ENCODE measurements at regions of chr20 and their contacts with region 1.

Region 1: DNA sequence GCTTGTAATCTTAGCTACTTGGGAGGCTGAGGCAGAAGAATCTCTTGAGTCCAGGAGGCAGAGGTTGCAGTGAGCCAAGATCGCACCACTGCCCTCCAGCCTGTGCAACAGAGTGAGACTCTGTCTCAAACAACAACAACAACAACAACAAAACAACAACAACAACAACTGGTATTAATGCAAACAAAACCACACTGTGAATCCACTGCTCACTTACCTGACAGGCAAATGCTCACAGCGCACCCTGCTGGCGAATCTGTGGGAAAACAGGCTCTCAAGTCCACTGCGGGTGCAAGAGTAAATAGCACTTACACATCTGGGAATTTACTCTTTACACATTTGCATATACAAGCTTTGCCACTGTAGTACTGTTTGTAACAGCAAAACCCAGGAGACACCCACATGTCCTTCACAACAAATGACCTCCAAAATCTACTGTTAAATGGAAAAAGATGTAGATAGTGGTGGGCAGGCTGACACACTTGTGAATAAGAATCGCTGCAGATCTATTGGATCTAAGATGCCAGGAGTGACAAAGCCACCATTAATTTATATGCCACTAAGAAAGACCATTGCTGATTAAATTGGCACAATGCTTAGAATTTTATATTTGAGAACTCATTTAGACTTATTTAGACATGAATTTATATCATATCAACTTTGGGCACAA is 29.3 kb downstream of the NSFL1C start:
- DNase-seq: peak; percentile 79
- CTCF ChIP-seq: peak; percentile 85

Region 2: DNA sequence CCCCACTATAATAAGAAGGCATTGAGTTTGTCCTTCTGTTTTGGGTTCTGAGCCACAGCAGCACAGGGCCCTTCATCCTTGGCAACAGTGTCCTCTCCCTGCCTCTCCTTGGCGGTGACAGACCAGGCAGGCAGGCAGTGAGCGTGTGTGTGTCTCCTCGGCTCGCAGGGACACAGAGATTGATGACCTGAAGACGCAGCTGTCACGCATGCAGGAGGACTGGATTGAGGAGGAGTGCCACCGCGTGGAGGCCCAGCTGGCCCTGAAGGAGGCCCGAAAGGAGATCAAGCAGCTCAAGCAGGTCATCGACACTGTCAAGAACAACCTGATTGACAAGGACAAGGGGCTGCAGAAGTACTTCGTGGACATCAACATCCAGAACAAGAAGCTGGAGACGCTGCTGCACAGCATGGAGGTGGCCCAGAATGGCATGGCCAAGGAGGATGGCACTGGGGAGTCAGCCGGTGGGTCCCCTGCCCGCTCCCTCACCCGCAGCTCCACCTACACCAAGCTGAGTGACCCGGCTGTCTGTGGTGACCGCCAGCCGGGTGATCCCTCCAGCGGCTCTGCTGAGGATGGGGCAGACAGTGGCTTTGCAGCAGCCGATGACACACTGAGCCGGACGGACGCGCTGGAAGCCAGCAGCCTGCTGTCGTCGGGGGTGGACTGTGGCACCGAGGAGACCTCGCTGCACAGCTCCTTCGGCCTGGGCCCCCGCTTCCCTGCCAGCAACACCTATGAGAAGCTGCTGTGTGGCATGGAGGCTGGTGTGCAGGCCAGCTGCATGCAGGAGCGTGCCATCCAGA is 132.5 kb before region 1 on chr20:
- CTCF ChIA-PET with region 1: interaction called, 12 read pairs
- POLR2A ChIA-PET with region 1: no interaction called
- DNase-seq: no peak
- CTCF ChIP-seq: no peak

Region 3: DNA sequence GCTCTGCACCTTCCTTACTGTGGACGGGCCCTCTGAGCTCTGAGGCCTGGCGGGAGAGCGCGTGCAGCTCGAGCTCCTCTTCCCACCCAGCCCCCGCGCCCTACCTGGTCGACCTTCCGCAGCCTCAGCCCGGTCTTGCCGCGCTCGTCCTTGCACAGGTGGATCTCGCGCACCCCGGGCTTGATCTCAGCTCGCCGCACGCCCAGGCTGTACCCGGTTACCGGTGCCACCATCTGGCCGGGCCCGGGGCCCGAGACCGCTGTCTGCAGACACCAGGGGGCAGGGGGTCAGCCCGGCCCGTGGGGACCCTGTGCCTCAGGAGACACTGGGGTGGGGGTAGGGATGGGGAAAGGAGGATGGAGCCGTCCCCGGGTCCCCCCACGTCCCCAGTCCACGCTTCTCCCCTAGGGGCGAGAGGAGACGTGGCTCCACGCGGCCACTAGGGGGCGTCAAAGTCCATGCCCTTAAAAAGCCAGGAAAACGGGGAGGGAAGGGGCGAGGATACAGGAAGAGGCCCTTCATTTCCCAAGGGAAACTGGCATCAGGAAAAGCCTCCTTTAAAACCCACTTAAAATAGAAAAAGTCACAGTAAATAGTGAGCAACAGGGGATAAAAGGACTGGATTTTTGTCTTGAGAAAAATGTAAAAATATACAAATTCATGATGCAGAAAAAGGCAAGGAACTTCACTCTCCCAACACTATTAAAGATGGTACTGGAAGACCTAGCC is 124.0 kb before region 1 on chr20:
- CTCF ChIA-PET with region 1: interaction called, 47 read pairs
- POLR2A ChIA-PET with region 1: no interaction called
- DNase-seq: peak; percentile 81
- CTCF ChIP-seq: peak; percentile 88

Region 4: DNA sequence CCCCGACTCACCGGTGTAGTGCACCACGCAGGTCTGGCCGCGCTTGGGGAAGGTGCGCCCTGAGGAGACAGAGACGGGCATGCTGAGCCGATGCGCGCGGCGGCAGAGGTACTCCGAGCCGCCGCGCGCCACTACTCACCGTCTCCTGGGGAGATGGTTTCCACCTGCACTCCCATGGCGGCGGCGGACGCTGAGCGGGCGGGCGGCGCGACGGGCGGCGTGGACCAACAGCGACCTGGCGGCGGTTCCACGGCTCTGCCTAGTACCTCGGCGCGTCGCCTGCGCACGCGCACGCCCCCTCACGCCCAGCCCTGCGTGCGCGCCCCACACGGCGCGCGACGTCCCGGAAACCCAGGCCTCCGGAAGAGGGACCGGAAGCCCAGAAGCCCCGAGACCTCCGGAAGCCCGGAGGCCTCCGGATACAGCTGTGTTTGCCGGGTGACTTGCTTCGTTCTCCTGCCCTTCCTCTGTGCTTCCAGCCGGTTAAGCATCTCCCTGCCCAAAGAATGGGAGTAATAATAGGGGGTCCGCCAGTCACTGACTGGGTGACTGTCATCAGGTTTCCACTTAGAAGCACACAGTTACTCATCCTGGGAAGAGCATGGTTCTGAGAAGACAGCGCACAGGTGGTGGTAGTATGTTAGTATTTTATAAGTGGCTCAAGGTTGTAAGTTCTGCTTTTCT is 44.4 kb before region 1 on chr20 and contains the start of gene FKBP1A:
- CTCF ChIA-PET with region 1: interaction called, 24 read pairs
- POLR2A ChIA-PET with region 1: no interaction called
- DNase-seq: peak; percentile 93
- CTCF ChIP-seq: no peak

Region 5: DNA sequence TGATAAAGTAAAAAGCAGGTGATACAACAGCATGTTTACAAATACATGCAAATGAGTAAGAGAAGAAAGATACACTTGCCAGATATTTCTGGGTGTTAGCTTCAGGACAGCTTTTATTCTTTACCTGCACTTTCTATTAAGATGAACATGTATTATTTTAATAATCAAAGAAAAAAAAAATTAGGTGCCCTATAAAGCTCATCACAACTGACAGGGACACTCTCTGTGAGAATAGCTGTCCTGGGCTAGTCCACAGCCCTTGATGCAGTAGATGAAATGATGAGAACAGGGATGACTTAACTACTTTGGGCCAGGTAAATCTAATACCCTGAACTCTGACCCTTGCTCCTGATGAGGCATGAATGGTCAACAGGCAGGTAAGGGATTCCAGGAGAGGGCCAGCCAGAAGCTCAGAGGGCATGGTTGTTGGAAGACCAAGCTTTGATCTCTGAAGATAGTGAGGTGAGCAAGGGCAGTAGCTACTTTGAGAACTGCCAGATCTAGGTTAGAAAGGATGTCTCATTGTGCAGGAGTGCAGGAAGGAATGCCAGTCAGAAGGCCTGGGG is 13.6 kb after region 1 on chr20:
- CTCF ChIA-PET with region 1: interaction called, 91 read pairs
- POLR2A ChIA-PET with region 1: no interaction called
- DNase-seq: no peak
- CTCF ChIP-seq: no peak

Region 6: DNA sequence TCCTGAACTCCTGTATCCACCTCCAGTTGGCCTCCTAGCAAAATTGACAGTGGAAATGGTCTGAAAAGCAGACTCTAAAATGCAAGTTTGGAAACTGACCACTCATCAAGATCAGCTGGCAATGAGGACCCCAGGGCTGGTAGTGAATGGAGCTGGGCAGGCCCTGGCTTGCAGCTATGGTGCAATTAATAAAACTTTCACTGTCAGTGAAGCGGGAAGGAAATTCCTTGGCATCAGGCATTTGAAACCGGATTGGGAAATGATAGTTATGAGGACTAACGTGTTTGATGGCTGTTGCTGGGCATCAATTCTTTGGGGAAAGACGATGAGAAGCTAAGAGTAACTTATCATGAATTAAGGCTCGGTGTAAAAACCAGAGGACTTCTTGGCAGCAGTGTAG is 163.4 kb after region 1 on chr20:
- CTCF ChIA-PET with region 1: no interaction called
- POLR2A ChIA-PET with region 1: no interaction called
- DNase-seq: no peak
- CTCF ChIP-seq: no peak